Activated naive CD4-positive, alpha-beta T cell treated with anti-CD3 and anti-CD28 coated beads for 36 hours (primary cell): ENCODE measurements at regions of chr9 and their contacts with region 1.

Region 1: GRCh38 chr9:33076358-33077004 is at the start of gene SMU1:
- DNase-seq: peak; percentile 98
- H3K4me3 Mint-ChIP-seq: peak within 1 kb of the TSS; percentile 96
- H3K27ac Mint-ChIP-seq: peak within 1 kb of the TSS; percentile 97
- H3K4me1 Mint-ChIP-seq: peaks cover 50% of the 10 kb centered on the region
- H3K27me3 Mint-ChIP-seq: no peaks in the 10 kb centered on the region
- total RNA-seq, gene SMU1: 23.7 to 23.9 TPM

Region 2: DNA sequence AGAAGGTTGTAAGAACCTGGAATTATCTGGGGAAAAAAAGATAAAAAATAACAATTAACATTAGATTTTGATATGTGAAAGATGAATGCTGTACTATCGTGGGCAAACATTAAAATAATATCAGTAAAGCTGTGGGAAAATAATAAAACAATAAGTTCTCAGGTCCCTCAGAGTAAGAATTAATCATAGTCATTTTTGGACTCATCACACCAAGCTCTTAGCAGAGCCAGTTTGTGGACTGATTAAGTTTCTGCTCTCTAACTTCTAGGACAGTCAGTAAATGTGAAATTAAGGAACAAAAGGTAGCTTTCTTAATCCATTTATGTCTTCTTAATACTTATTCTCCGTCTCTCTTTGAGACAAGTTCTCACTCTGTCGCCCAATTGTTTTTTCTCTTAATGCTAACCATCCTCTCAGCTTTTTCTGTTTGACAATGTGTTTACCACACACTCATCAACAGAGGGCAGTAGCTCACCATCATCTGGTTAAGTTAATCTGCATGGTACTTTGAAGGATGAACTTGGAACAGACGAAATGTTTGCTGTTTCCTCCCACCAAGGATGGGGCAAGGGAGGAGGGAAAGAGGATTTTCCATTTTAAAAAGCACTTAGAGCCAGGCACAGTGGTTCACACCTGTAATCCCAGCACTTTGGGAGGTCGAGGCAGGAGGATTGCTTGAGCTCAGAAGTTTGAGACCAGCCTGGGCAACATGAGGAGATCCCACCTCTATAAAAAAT is 697.3 kb before region 1 on chr9:
- CTCF ChIA-PET with region 1: interaction called, 3 read pairs
- intact Hi-C with region 1: loop called (anchors 2 kb)
- DNase-seq: peak; percentile 67
- H3K4me3 Mint-ChIP-seq: no peak overlapping the region
- H3K27ac Mint-ChIP-seq: no peak overlapping the region
- H3K4me1 Mint-ChIP-seq: peaks cover 15% of the 10 kb centered on the region
- H3K27me3 Mint-ChIP-seq: peaks cover 3% of the 10 kb centered on the region

Region 3: GRCh38 chr9:32886021-32886420 is 190.5 kb before region 1 on chr9:
- CTCF ChIA-PET with region 1: no interaction called
- intact Hi-C with region 1: no loop called
- DNase-seq: no peak
- H3K4me3 Mint-ChIP-seq: no peak overlapping the region
- H3K27ac Mint-ChIP-seq: no peak overlapping the region
- H3K4me1 Mint-ChIP-seq: no peaks in the 10 kb centered on the region
- H3K27me3 Mint-ChIP-seq: no peaks in the 10 kb centered on the region

Region 4: DNA sequence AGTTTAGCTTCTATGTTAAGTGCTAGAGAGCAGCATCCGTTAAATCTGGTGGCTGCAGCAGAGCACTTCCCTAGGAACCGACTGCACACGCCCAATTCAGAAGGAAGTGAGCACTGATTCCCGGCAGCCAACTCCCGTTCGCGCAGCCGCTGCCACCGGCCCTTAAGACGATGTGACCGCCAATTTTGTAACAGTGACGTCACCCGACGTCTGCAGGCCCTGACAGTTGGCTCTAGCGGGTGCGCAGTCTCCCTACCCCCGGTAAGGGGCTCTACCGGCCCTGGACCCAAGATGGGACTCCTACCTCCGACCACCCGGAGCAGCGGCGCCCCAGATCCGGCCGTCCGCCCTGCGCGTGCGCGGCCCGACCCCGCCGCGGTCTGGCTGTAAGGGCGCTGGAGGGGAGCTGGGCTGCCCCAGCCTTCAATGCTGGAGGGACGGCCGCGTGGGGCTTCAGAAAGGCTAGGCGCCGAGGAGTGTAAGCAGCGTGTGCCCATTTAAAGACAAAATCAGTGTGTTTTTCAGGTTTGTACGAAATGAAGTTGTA is 32.3 kb before region 1 on chr9:
- CTCF ChIA-PET with region 1: no interaction called
- intact Hi-C with region 1: loop called (anchors 1 kb)
- DNase-seq: peak; percentile 85
- H3K4me3 Mint-ChIP-seq: peak overlapping the region; percentile 71
- H3K27ac Mint-ChIP-seq: peak overlapping the region; percentile 72
- H3K4me1 Mint-ChIP-seq: peaks cover 17% of the 10 kb centered on the region
- H3K27me3 Mint-ChIP-seq: no peaks in the 10 kb centered on the region

Region 5: DNA sequence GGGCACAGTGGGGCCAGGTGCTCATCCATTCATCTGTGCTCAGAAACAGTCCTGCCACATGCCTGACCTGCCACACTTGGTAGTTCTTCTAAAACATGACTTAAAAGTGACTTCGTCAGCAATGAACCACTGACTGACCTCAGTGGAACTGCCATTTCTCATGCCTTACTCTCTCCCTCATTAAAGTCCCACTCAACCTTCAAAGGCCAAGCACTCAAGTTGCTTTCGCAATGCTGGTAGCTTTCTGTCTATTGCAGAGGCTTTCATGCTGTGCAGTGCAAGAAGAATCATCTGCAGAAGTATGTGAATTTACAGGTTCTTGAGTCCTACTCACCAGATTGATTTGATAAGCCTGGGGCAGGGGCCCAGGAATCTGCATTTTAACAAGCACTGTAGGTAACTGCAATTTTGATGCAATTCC is 66.8 kb after region 1 on chr9:
- CTCF ChIA-PET with region 1: no interaction called
- intact Hi-C with region 1: loop called (anchors 1 kb)
- DNase-seq: peak; percentile 30
- H3K4me3 Mint-ChIP-seq: no peak overlapping the region
- H3K27ac Mint-ChIP-seq: peak overlapping the region; percentile 34
- H3K4me1 Mint-ChIP-seq: peaks cover 89% of the 10 kb centered on the region
- H3K27me3 Mint-ChIP-seq: no peaks in the 10 kb centered on the region

Region 6: DNA sequence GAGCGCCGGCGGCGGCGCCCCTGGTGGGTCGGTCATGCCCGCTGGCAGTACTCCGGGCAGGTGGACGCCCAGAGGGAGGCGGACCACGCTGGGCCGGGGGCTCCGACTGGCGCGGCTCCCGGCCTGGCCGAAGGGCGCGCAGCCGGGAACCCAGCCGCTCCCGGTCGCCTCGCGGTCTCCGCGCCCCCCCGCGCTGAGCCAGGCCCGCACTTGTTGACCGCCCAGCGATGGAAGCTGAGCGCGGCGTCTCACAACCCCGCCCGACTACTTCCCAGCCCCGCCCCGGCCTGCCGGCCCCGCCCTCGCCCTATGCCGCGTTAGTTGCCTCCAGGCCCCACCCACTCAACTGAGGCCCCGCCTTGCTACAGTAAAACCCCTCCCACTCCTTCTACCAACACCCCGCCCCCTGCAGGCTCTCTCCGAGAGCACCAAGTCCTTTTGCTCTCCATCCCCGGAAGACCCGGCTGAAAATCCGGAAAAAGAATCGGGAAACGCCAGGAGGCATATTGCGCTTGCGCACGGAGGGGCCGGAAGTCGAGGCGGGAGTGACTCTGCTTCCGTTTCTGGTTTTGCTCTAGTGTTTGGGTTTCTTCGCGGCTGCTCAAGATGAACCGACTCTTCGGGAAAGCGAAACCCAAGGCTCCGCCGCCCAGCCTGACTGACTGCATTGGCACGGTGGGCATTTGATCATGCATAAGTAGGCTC is 188.1 kb after region 1 on chr9 and contains the starts of genes BAG1 and CHMP5:
- CTCF ChIA-PET with region 1: no interaction called
- intact Hi-C with region 1: loop called (anchors 1 kb)
- DNase-seq: peak; percentile 100
- H3K4me3 Mint-ChIP-seq: peak within 1 kb of the TSS; percentile 94
- H3K27ac Mint-ChIP-seq: peak within 1 kb of the TSS; percentile 98
- H3K4me1 Mint-ChIP-seq: peaks cover 47% of the 10 kb centered on the region
- H3K27me3 Mint-ChIP-seq: no peaks in the 10 kb centered on the region
- total RNA-seq, gene BAG1: 38.1 to 40.5 TPM
- total RNA-seq, gene CHMP5: 151 to 162 TPM

Region 7: DNA sequence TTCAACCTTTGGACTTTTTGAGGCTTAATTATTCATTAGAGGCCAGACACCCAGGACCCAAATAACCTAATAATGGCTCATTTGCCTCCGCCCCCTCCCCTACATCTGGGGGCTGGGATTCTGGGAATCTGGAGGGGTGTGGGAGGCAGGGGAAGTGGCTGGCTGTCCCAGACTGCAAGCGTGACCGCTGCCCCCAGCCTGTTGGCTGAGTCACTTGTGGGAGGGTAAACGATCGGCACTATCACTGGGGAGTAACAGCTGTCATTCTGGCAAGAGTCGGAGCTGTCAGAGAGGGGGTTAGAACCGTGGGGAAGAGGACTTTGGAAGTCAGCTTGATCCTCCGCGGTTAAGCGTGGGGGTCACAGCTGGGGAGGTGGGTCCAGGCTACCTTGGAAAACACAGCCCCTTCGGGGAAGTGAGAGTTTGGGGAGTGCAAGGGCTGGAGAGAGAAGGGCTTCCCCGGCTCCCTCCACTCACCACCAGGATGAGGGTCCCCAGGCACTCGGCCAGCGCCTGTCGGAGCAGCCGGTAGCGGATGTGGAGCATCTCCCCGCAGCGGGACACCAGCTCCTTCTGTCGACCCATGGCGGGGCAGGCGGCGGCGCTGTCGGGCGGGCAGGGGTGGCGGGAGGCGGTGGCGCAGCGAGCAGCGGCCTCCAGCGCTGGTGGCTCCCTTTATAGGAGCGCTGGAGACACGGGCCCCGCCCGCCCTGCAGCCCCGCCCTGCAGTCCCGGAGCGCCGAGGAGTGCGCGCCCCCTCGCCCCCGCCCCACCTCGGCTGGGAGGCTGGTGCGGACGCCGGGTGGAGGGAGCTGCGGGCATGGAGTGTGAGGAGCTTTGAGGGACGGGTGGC is 370.7 kb after region 1 on chr9 and contains the start of gene AQP3:
- CTCF ChIA-PET with region 1: no interaction called
- intact Hi-C with region 1: loop called (anchors 2 kb)
- DNase-seq: peak; percentile 85
- H3K4me3 Mint-ChIP-seq: peak within 1 kb of the TSS; percentile 86
- H3K27ac Mint-ChIP-seq: peak within 1 kb of the TSS; percentile 91
- H3K4me1 Mint-ChIP-seq: peaks cover 52% of the 10 kb centered on the region
- H3K27me3 Mint-ChIP-seq: no peaks in the 10 kb centered on the region
- total RNA-seq, gene AQP3: 7.2 to 8.1 TPM